ENCODE measurements at regions of chr2 and their contacts with region 1.

Region 1: GRCh38 chr2:27683390-27684071 is 19.8 kb downstream of the SLC4A1AP start:
- DNase-seq: peak; percentile 97
- H3K4me3 Mint-ChIP-seq: no peak overlapping the region
- H3K27ac Mint-ChIP-seq: peak overlapping the region; percentile 79
- H3K4me1 Mint-ChIP-seq: peaks cover 26% of the 10 kb centered on the region
- H3K27me3 Mint-ChIP-seq: no peaks in the 10 kb centered on the region

Region 2: GRCh38 chr2:27380626-27381545 is 302.6 kb before region 1 on chr2 and contains the start of gene ZNF513:
- intact Hi-C with region 1: loop called (anchors 5 kb)
- DNase-seq: peak; percentile 97
- H3K4me3 Mint-ChIP-seq: peak within 1 kb of the TSS; percentile 95
- H3K27ac Mint-ChIP-seq: peak within 1 kb of the TSS; percentile 97
- H3K4me1 Mint-ChIP-seq: peaks cover 30% of the 10 kb centered on the region
- H3K27me3 Mint-ChIP-seq: no peaks in the 10 kb centered on the region
- total RNA-seq, gene ZNF513: 11.1 and 13.5 TPM in 2 replicates

Region 3: DNA sequence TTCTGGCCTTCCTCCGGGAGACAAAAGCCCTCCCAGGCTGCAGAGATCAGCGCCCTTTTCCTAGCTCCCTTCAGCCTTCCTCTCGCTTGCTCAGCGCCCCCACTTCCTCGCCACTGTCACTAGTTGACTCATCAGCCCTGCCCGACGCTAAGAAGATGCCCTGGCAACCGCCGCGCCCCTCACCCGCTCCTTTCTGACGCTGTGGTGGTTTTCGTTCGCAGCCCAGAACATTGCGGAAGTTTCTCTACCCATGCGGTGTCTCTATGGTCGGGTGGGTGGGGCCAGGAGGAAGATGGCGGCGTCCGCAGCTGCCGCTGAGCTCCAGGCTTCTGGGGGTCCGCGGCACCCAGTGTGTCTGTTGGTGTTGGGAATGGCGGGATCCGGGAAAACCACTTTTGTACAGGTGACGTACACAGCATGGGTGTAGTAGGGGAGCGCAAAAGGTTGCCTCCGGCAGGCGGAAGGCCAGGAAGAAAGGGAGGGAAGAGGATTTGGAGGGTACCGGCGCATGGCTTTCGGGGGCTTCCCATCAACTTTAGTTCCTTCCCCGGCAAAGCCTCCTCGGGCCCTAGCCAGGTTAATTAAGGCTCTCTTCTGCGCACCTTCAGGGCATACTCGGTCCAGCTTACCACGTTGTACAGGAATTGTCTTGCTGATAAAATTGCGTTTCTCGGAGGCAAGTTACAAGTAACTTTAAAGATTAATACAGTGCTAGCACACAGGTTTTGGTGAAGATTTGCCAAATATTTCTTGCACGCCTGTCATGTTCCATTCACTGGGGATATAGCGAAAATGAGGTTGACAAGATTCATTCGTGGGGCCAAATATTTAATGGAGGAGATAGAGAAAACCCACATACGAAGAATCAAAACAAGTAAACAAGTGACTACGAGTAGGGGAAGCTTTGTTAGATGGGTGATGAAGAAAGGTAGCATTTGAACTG is 54.5 kb before region 1 on chr2 and contains the starts of genes CCDC121 and GPN1:
- intact Hi-C with region 1: loop called (anchors 2 kb)
- DNase-seq: peak; percentile 98
- H3K4me3 Mint-ChIP-seq: no peak within 1 kb of the TSS
- H3K27ac Mint-ChIP-seq: no peak within 1 kb of the TSS
- H3K4me1 Mint-ChIP-seq: peaks cover 25% of the 10 kb centered on the region
- H3K27me3 Mint-ChIP-seq: no peaks in the 10 kb centered on the region
- total RNA-seq, gene CCDC121: 0.54 and 0.63 TPM in 2 replicates
- total RNA-seq, gene GPN1: 51.0 and 55.4 TPM in 2 replicates

Region 4: DNA sequence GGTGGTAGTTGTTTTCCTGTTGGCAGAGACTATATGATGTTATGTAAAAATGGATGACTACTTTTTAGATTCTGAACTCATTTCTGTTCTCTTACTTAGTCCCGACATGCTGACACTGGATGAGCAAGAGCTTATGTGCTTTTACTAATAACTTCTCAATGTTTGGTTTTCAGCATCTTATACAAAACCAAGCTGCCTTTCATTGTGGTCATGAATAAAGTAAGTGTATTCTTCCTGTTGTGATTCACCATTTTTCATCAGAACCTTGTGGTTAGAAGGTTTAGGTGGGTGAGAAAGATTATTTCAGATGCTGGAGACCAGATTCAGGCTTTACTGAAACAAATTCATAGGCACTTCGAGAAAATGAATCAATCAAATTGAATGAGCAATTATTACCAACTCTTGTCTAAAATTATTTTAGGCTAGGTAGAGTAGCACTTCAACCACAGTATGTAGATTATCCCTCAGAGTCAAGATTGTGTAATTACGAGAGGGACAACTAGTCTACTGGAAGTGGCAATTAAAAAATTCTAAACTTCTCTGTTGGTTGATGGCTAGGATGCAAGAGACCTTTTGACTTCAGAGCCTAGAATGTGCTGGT is 45.4 kb before region 1 on chr2:
- intact Hi-C with region 1: loop called (anchors 2 kb)
- DNase-seq: peak; percentile 64
- H3K4me3 Mint-ChIP-seq: peak overlapping the region; percentile 72
- H3K27ac Mint-ChIP-seq: peak overlapping the region; percentile 93
- H3K4me1 Mint-ChIP-seq: peaks cover 19% of the 10 kb centered on the region
- H3K27me3 Mint-ChIP-seq: no peaks in the 10 kb centered on the region

Region 5: DNA sequence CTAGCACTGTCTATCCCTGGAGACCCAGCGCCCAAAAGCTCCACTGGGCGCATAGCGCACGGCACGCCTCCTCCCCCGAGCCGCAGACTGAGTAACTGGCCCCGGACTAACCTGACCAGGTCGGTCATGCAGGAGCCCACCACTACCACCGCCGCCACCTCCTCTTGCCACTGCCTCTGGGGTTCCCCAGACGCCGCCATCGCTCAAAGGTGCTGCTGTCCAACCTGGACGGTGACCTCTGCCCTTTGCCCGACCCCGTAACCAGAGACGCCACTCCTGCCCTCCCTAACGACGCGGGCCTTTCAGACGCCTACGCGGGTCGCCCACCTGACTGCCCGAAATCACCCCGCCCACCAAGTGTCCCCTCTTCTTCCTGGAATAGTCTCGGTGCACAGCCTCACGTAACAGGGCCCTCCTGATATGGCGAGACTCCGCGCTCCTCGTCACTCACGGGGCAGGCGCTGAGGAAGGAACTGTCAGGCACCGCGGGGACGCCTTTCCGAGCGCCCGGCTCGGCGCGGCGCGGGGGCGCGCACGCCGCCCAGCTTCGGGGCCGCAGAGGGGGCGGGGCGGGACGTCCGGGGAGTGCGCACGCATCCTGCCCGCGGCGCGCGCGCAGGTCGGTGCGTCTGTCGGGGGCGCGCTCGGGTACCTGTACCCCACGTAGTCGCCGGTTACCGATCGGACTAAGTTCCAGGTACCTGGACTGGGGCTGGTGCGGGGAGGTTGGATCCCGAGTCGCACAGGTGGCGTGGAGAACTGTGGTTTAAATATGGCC is 206.8 kb after region 1 on chr2 and contains the starts of genes BABAM2 and RBKS:
- intact Hi-C with region 1: no loop called
- DNase-seq: peak; percentile 97
- H3K4me3 Mint-ChIP-seq: peak within 1 kb of the TSS; percentile 100
- H3K27ac Mint-ChIP-seq: peak within 1 kb of the TSS; percentile 100
- H3K4me1 Mint-ChIP-seq: peaks cover 57% of the 10 kb centered on the region
- H3K27me3 Mint-ChIP-seq: peaks cover 2% of the 10 kb centered on the region
- total RNA-seq, gene BABAM2: 45.9 and 46.7 TPM in 2 replicates
- total RNA-seq, gene RBKS: 1.3 and 1.4 TPM in 2 replicates

Measured in activated CD4-positive, alpha-beta T cell treated with anti-CD3 and anti-CD28 coated beads, Interleukin-2, amount 10 ng/mL, durations not matched to agents 24 days and 14 days (primary cell).